A549 (cell line): ENCODE measurements at regions of chr4 and their contacts with region 1.

Region 1: GRCh38 chr4:7876201-7876875 is 63.3 kb downstream of the AFAP1 start:
- DNase-seq: peak; percentile 75 to 85
- ATAC-seq: peak; percentile 90 to 92
- H3K4me3 ChIP-seq: no peak overlapping the region
- H3K27ac ChIP-seq: peak overlapping the region; percentile 88 to 96
- H3K4me1 ChIP-seq: peaks cover 94% of the 10 kb centered on the region
- CTCF ChIP-seq: peak; percentile 42
- EP300 ChIP-seq: no peak
- POLR2A ChIP-seq: no peak
- RAD21 ChIP-seq: peak; percentile 58 to 67

Region 2: GRCh38 chr4:7186061-7186461 is 690.3 kb before region 1 on chr4:
- CTCF ChIA-PET with region 1: no interaction called
- POLR2A ChIA-PET with region 1: no interaction called
- DNase-seq: peak in 1 of 2 experiments; percentile 49
- ATAC-seq: peak; percentile 57 to 78; a peak in 3 of 6 replicates
- H3K4me3 ChIP-seq: no peak overlapping the region
- H3K27ac ChIP-seq: no peak overlapping the region
- H3K4me1 ChIP-seq: no peaks in the 10 kb centered on the region
- CTCF ChIP-seq: peak; percentile 36
- EP300 ChIP-seq: no peak
- POLR2A ChIP-seq: no peak
- RAD21 ChIP-seq: peak; percentile 23 to 35; a peak in 3 of 5 replicates

Region 3: GRCh38 chr4:7564242-7564641 is 312.1 kb before region 1 on chr4:
- CTCF ChIA-PET with region 1: no interaction called
- POLR2A ChIA-PET with region 1: no interaction called
- DNase-seq: no peak
- ATAC-seq: no peak
- H3K4me3 ChIP-seq: no peak overlapping the region
- H3K27ac ChIP-seq: no peak overlapping the region
- H3K4me1 ChIP-seq: no peaks in the 10 kb centered on the region
- CTCF ChIP-seq: no peak
- EP300 ChIP-seq: no peak
- POLR2A ChIP-seq: no peak
- RAD21 ChIP-seq: no peak

Region 4: GRCh38 chr4:7792616-7793015 is 83.7 kb before region 1 on chr4:
- CTCF ChIA-PET with region 1: no interaction called
- POLR2A ChIA-PET with region 1: no interaction called
- DNase-seq: no peak
- ATAC-seq: no peak
- H3K4me3 ChIP-seq: no peak overlapping the region
- H3K27ac ChIP-seq: no peak overlapping the region
- H3K4me1 ChIP-seq: no peaks in the 10 kb centered on the region
- CTCF ChIP-seq: no peak
- EP300 ChIP-seq: no peak
- POLR2A ChIP-seq: no peak
- RAD21 ChIP-seq: no peak

Region 5: GRCh38 chr4:7843831-7844593 is 32.3 kb before region 1 on chr4:
- CTCF ChIA-PET with region 1: interaction called, 20 read pairs
- POLR2A ChIA-PET with region 1: no interaction called
- DNase-seq: peak; percentile 61 to 86
- ATAC-seq: peak; percentile 81 to 89
- H3K4me3 ChIP-seq: no peak overlapping the region
- H3K27ac ChIP-seq: peak overlapping the region; percentile 93 to 98
- H3K4me1 ChIP-seq: peaks cover 69% of the 10 kb centered on the region
- CTCF ChIP-seq: peak; percentile 47
- EP300 ChIP-seq: no peak
- POLR2A ChIP-seq: no peak
- RAD21 ChIP-seq: peak; percentile 57

Region 6: GRCh38 chr4:7929118-7929951 is 53.0 kb after region 1 on chr4:
- CTCF ChIA-PET with region 1: interaction called, 13 read pairs
- POLR2A ChIA-PET with region 1: no interaction called
- DNase-seq: peak in 1 of 2 experiments; percentile 51
- ATAC-seq: peak; percentile 72 to 78; a peak in 5 of 6 replicates
- H3K4me3 ChIP-seq: no peak overlapping the region
- H3K27ac ChIP-seq: peak overlapping the region; percentile 47 to 84
- H3K4me1 ChIP-seq: peaks cover 52% of the 10 kb centered on the region
- CTCF ChIP-seq: peak; percentile 30
- EP300 ChIP-seq: no peak
- POLR2A ChIP-seq: no peak
- RAD21 ChIP-seq: peak; percentile 61 to 63

Region 7: DNA sequence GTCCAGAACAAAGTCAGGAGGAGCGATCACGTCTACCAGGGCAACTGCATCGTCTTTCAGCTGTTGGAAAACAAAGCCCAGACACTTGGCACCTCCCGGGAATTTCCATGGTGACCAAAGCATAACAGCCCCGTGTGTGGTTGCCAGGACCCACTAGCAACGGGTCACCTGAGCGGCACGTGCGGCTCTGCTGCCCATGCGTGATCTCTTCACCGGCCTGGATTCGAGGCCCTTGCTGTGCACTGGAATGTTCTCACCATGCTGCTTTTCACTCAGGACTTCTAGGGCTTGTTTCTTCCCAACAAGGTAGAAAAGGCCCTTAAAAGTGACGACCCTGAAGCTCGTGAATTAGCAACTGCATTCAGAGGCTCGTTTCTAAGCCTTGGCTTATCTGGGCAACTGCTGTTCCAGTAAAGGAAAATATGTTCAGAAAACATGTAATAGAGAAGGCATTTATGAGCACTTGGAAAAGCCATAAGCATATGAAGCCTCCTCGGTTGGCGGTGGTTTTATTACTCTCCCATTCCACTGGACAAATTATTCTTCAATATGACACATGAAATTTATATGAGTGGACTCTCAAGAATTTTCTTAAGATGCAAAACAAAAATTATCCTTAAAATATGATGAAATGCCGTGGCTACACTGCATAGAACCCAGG is 494.7 kb after region 1 on chr4:
- CTCF ChIA-PET with region 1: no interaction called
- POLR2A ChIA-PET with region 1: no interaction called
- DNase-seq: no peak
- ATAC-seq: no peak
- H3K4me3 ChIP-seq: no peak overlapping the region
- H3K27ac ChIP-seq: no peak overlapping the region
- H3K4me1 ChIP-seq: no peaks in the 10 kb centered on the region
- CTCF ChIP-seq: no peak
- EP300 ChIP-seq: no peak
- POLR2A ChIP-seq: no peak
- RAD21 ChIP-seq: no peak